A549 (cell line): ENCODE measurements at regions of chr9 and their contacts with region 1.

Region 1: GRCh38 chr9:129641746-129642513 is at the start of gene ASB6:
- DNase-seq: peak; percentile 98
- ATAC-seq: peak; percentile 93 to 97
- H3K4me3 ChIP-seq: peak within 1 kb of the TSS; percentile 87
- H3K27ac ChIP-seq: peak within 1 kb of the TSS; percentile 83 to 94
- H3K4me1 ChIP-seq: peaks cover 18% of the 10 kb centered on the region
- CTCF ChIP-seq: peak; percentile 99
- EP300 ChIP-seq: no peak
- POLR2A ChIP-seq: peak; percentile 60
- RAD21 ChIP-seq: peak; percentile 87 to 99
- polyA plus RNA-seq, gene ASB6: 9.2 and 9.4 TPM in 2 replicates

Region 2: DNA sequence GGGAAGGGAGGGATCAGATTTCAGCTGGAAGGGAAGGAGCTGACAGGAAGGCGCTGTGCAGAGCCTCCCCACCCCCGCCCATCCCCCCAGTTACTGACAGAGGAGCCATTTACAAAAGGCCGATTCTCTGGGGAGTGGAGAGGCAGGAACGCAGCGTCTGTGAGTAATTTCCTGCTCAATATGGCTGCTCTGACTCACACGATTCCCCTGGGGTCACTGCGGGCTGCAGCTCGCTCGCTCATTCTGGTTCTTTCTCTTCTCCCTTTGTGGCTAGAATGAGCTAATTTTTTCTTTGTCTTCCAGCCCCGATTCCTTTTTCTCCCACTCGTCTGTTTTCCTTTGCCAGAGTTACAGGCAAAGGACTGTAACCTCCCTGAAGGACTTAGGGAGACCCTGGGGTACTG is 501.9 kb before region 1 on chr9:
- CTCF ChIA-PET with region 1: interaction called, 947 read pairs
- POLR2A ChIA-PET with region 1: interaction called, 4 read pairs
- DNase-seq: peak; percentile 95 to 97
- ATAC-seq: peak; percentile 81 to 82
- H3K4me3 ChIP-seq: peak overlapping the region; percentile 44
- H3K27ac ChIP-seq: peak overlapping the region; percentile 99
- H3K4me1 ChIP-seq: peaks cover 60% of the 10 kb centered on the region
- CTCF ChIP-seq: no peak
- EP300 ChIP-seq: peak in 1 of 2 experiments; percentile 62; a peak in 1 of 5 replicates
- POLR2A ChIP-seq: peak; percentile 45
- RAD21 ChIP-seq: peak in 1 of 2 experiments; percentile 30; a peak in 2 of 5 replicates

Region 3: GRCh38 chr9:129656795-129657390 is 15.0 kb after region 1 on chr9:
- CTCF ChIA-PET with region 1: interaction called, 24 read pairs
- POLR2A ChIA-PET with region 1: no interaction called
- DNase-seq: peak; percentile 57 to 83
- ATAC-seq: peak; percentile 89 to 92
- H3K4me3 ChIP-seq: no peak overlapping the region
- H3K27ac ChIP-seq: peak overlapping the region; percentile 40 to 47; a peak in 3 of 6 replicates
- H3K4me1 ChIP-seq: peaks cover 17% of the 10 kb centered on the region
- CTCF ChIP-seq: no peak
- EP300 ChIP-seq: no peak
- POLR2A ChIP-seq: no peak
- RAD21 ChIP-seq: no peak

Region 4: DNA sequence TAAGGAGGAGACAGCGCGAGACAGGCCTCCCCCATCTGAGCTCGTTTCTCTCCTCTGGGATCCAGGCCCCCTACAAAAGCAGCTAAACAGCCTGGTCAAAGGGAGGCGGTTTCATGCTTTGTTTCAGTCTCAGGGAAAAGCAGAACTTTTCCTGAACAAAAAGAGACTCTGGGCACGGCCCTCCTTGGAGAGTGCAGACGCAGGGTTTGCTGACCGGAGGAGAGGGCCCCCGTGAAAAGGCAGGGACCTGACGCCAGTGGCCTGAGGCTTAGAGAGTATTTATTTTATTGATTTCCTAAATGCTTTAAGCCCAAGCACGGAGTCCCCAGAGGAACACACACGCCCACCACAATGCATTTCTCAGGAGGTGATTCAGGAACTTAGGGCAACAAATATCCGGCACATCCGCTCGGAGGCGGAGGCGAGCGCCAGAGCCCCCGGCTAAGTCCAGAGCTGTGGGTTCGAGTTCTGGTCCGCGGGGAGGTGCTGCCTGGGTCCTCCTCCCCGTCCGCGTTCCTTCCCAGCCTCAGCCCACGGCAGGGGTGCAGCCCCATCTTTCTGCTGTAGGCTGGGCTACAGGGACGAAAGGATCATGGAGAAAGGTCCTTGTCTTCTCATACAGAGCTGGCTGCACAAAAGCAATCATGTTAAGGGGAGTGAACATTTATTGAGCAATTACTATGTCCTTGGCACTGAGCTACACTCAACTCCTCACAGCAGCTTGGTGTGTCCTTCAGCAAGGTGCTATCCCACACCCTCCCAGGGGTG is 70.9 kb after region 1 on chr9:
- CTCF ChIA-PET with region 1: interaction called, 11 read pairs
- POLR2A ChIA-PET with region 1: no interaction called
- DNase-seq: no peak
- ATAC-seq: no peak
- H3K4me3 ChIP-seq: no peak overlapping the region
- H3K27ac ChIP-seq: no peak overlapping the region
- H3K4me1 ChIP-seq: no peaks in the 10 kb centered on the region
- CTCF ChIP-seq: no peak
- EP300 ChIP-seq: no peak
- POLR2A ChIP-seq: no peak
- RAD21 ChIP-seq: no peak

Region 5: GRCh38 chr9:129776938-129777768 is 135.2 kb after region 1 on chr9:
- CTCF ChIA-PET with region 1: interaction called, 251 read pairs
- POLR2A ChIA-PET with region 1: interaction called, 3 read pairs
- DNase-seq: peak; percentile 96 to 99
- ATAC-seq: peak; percentile 95 to 97
- H3K4me3 ChIP-seq: 0 out of 3 replicates have a peak overlapping the region, but pooled peaks have one; percentile 11
- H3K27ac ChIP-seq: peak overlapping the region; percentile 88 to 89
- H3K4me1 ChIP-seq: peaks cover 66% of the 10 kb centered on the region
- CTCF ChIP-seq: no peak
- EP300 ChIP-seq: peak; percentile 55 to 89; a peak in 3 of 5 replicates
- POLR2A ChIP-seq: peak; percentile 42
- RAD21 ChIP-seq: peak in 1 of 2 experiments; percentile 26; a peak in 1 of 5 replicates